Common myeloid progenitor, CD34-positive (primary cell): ENCODE measurements at regions of chr3 and their contacts with region 1.

Region 1: GRCh38 chr3:31227131-31227562 is 305.6 kb upstream of the STT3B start:
- DNase-seq: peak; percentile 87 to 99 (median 97)
- H3K4me3 ChIP-seq: peak overlapping the region in 1 of 7 experiments; percentile 30
- H3K27ac ChIP-seq: peak overlapping the region; percentile 91 to 94
- H3K4me1 ChIP-seq: peaks cover 49 to 88% (median 79%) of the 10 kb centered on the region in 4 experiments
- H3K27me3 ChIP-seq: no peaks in the 10 kb centered on the region

Region 2: GRCh38 chr3:31176045-31176444 is 51.1 kb before region 1 on chr3:
- CTCF ChIA-PET with region 1: no interaction called
- POLR2A ChIA-PET with region 1: no interaction called
- DNase-seq: no peak
- H3K4me3 ChIP-seq: no peak overlapping the region
- H3K27ac ChIP-seq: no peak overlapping the region
- H3K4me1 ChIP-seq: peaks cover 4 to 17% (median 12%) of the 10 kb centered on the region in 4 experiments
- H3K27me3 ChIP-seq: no peaks in the 10 kb centered on the region

Region 3: GRCh38 chr3:31213869-31214486 is 13.2 kb before region 1 on chr3:
- CTCF ChIA-PET with region 1: interaction called, 12 read pairs
- POLR2A ChIA-PET with region 1: interaction called, 3 read pairs
- DNase-seq: peak; percentile 69 to 90 (median 84)
- H3K4me3 ChIP-seq: peak overlapping the region in 6 of 7 experiments; percentile 9 to 56 (median 33)
- H3K27ac ChIP-seq: peak overlapping the region in 1 of 2 experiments; percentile 4
- H3K4me1 ChIP-seq: peaks cover 36 to 73% (median 45%) of the 10 kb centered on the region in 4 experiments
- H3K27me3 ChIP-seq: no peaks in the 10 kb centered on the region

Region 4: GRCh38 chr3:31265646-31266428 is 38.7 kb after region 1 on chr3:
- CTCF ChIA-PET with region 1: interaction called, 27 read pairs
- POLR2A ChIA-PET with region 1: interaction called, 3 read pairs
- DNase-seq: peak; percentile 17 to 81 (median 70)
- H3K4me3 ChIP-seq: no peak overlapping the region
- H3K27ac ChIP-seq: no peak overlapping the region
- H3K4me1 ChIP-seq: peaks cover 0 to 33% (median 6%) of the 10 kb centered on the region in 4 experiments
- H3K27me3 ChIP-seq: no peaks in the 10 kb centered on the region